Natural killer cell (primary cell): ENCODE measurements at regions of chr1 and their contacts with region 1.

Region 1: DNA sequence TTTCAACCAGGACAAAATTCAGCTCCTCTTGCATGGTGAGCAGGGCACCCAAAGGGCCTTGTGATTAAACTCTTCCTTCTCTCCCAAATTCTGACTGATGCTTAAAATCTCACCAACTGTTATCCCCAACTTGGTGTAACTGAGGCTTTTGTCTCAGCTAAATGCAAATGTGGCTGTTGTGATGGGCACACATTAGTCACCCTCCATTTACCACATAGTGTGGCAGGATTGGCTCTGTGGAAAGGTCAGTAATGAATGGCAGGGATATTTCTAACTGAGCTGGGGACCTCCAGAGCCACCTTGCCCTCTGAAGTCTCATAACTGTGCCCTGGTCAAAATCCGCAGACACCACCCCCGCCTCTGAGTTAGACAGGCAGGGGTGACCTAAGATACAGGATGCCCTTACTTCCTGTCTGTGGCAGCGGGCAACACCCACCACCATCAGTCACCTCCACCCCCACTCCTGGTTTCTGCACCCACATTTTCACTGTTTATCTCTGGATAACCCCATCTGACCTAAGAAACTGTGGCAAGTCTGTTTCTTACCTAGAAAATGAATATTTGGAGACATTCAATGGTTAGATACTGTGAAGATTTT is 25.4 kb upstream of the RGS16 start:
- DNase-seq: peak; percentile 66 to 73
- ATAC-seq: peak; percentile 90 to 97 (median 92)
- H3K4me3 ChIP-seq: no peak overlapping the region
- H3K4me3 Mint-ChIP-seq: peak overlapping the region; percentile 60
- H3K27ac ChIP-seq: no peak overlapping the region
- H3K27ac Mint-ChIP-seq: peak overlapping the region; percentile 57 to 72
- H3K4me1 ChIP-seq: peaks cover 18% of the 10 kb centered on the region
- H3K4me1 Mint-ChIP-seq: peaks cover 38 to 47% of the 10 kb centered on the region in 2 donors
- H3K27me3 ChIP-seq: no peaks in the 10 kb centered on the region
- H3K27me3 Mint-ChIP-seq: peaks cover 49 to 87% of the 10 kb centered on the region in 2 donors
- CTCF ChIP-seq: no peak

Region 2: GRCh38 chr1:182507665-182508064 is 121.9 kb before region 1 on chr1:
- intact Hi-C with region 1: no loop called
- DNase-seq: no peak
- ATAC-seq: no peak
- H3K4me3 ChIP-seq: no peak overlapping the region
- H3K4me3 Mint-ChIP-seq: no peak overlapping the region
- H3K27ac ChIP-seq: no peak overlapping the region
- H3K27ac Mint-ChIP-seq: no peak overlapping the region
- H3K4me1 ChIP-seq: no peaks in the 10 kb centered on the region
- H3K4me1 Mint-ChIP-seq: no peaks in the 10 kb centered on the region
- H3K27me3 ChIP-seq: no peaks in the 10 kb centered on the region
- H3K27me3 Mint-ChIP-seq: peaks cover 0 to 3% of the 10 kb centered on the region in 2 donors
- CTCF ChIP-seq: no peak

Region 3: GRCh38 chr1:182614796-182615454 is 14.7 kb before region 1 on chr1:
- intact Hi-C with region 1: loop called (anchors 1 kb)
- DNase-seq: peak; percentile 53 to 72
- ATAC-seq: peak; percentile 45 to 61 (median 48)
- H3K4me3 ChIP-seq: peak overlapping the region; percentile 36
- H3K4me3 Mint-ChIP-seq: peak overlapping the region; percentile 89
- H3K27ac ChIP-seq: no peak overlapping the region
- H3K27ac Mint-ChIP-seq: peak overlapping the region; percentile 85 to 94
- H3K4me1 ChIP-seq: peaks cover 32% of the 10 kb centered on the region
- H3K4me1 Mint-ChIP-seq: peaks cover 35 to 39% of the 10 kb centered on the region in 2 donors
- H3K27me3 ChIP-seq: peaks cover 54% of the 10 kb centered on the region
- H3K27me3 Mint-ChIP-seq: peaks cover 75 to 88% of the 10 kb centered on the region in 2 donors
- CTCF ChIP-seq: no peak